ENCODE measurements at regions of chr4 and their contacts with region 1.

Region 1: GRCh38 chr4:161936625-161937133 is 227.1 kb downstream of the FSTL5 start:
- DNase-seq: peak; percentile 91
- H3K4me3 ChIP-seq: no peak overlapping the region
- H3K27ac ChIP-seq: peak overlapping the region; percentile 74
- H3K4me1 ChIP-seq: peaks cover 37% of the 10 kb centered on the region
- H3K27me3 ChIP-seq: no peaks in the 10 kb centered on the region
- CTCF ChIP-seq: no peak
- POLR2A ChIP-seq: no peak

Region 2: GRCh38 chr4:161680146-161680545 is 256.5 kb before region 1 on chr4:
- CTCF ChIA-PET with region 1: interaction called, 7 read pairs
- POLR2A ChIA-PET with region 1: interaction called, 5 read pairs
- dilution Hi-C with region 1: no loop called
- intact Hi-C with region 1: loop called (anchors 1 kb)
- DNase-seq: peak; percentile 85
- H3K4me3 ChIP-seq: no peak overlapping the region
- H3K27ac ChIP-seq: peak overlapping the region; percentile 73
- H3K4me1 ChIP-seq: peaks cover 24% of the 10 kb centered on the region
- H3K27me3 ChIP-seq: no peaks in the 10 kb centered on the region
- CTCF ChIP-seq: no peak
- POLR2A ChIP-seq: peak; percentile 26

Region 3: GRCh38 chr4:161919442-161920220 is 17.0 kb before region 1 on chr4:
- CTCF ChIA-PET with region 1: no interaction called
- POLR2A ChIA-PET with region 1: no interaction called
- dilution Hi-C with region 1: no loop called
- intact Hi-C with region 1: no loop called
- DNase-seq: no peak
- H3K4me3 ChIP-seq: no peak overlapping the region
- H3K27ac ChIP-seq: no peak overlapping the region
- H3K4me1 ChIP-seq: no peaks in the 10 kb centered on the region
- H3K27me3 ChIP-seq: no peaks in the 10 kb centered on the region
- CTCF ChIP-seq: no peak
- POLR2A ChIP-seq: no peak

Region 4: GRCh38 chr4:161949946-161950725 is 13.5 kb after region 1 on chr4:
- CTCF ChIA-PET with region 1: interaction called, 12 read pairs
- POLR2A ChIA-PET with region 1: no interaction called
- dilution Hi-C with region 1: no loop called
- intact Hi-C with region 1: no loop called
- DNase-seq: no peak
- H3K4me3 ChIP-seq: no peak overlapping the region
- H3K27ac ChIP-seq: no peak overlapping the region
- H3K4me1 ChIP-seq: no peaks in the 10 kb centered on the region
- H3K27me3 ChIP-seq: no peaks in the 10 kb centered on the region
- CTCF ChIP-seq: no peak
- POLR2A ChIP-seq: no peak